ENCODE measurements at regions of chr10 and their contacts with region 1.

Region 1: GRCh38 chr10:3897156-3897555 is 112.1 kb upstream of the KLF6 start:
- DNase-seq: no peak
- H3K4me3 Mint-ChIP-seq: no peak overlapping the region
- H3K27ac Mint-ChIP-seq: no peak overlapping the region
- H3K4me1 Mint-ChIP-seq: peaks cover 36% of the 10 kb centered on the region
- H3K27me3 Mint-ChIP-seq: no peaks in the 10 kb centered on the region

Region 2: GRCh38 chr10:4017336-4017735 is 120.2 kb after region 1 on chr10:
- CTCF ChIA-PET with region 1: no interaction called
- POLR2A ChIA-PET with region 1: interaction called, 11 read pairs
- DNase-seq: no peak
- H3K4me3 Mint-ChIP-seq: no peak overlapping the region
- H3K27ac Mint-ChIP-seq: no peak overlapping the region
- H3K4me1 Mint-ChIP-seq: peaks cover 21% of the 10 kb centered on the region
- H3K27me3 Mint-ChIP-seq: no peaks in the 10 kb centered on the region